Naive thymus-derived CD8-positive, alpha-beta T cell (primary cell): ENCODE measurements at regions of chr7 and their contacts with region 1.

Region 1: DNA sequence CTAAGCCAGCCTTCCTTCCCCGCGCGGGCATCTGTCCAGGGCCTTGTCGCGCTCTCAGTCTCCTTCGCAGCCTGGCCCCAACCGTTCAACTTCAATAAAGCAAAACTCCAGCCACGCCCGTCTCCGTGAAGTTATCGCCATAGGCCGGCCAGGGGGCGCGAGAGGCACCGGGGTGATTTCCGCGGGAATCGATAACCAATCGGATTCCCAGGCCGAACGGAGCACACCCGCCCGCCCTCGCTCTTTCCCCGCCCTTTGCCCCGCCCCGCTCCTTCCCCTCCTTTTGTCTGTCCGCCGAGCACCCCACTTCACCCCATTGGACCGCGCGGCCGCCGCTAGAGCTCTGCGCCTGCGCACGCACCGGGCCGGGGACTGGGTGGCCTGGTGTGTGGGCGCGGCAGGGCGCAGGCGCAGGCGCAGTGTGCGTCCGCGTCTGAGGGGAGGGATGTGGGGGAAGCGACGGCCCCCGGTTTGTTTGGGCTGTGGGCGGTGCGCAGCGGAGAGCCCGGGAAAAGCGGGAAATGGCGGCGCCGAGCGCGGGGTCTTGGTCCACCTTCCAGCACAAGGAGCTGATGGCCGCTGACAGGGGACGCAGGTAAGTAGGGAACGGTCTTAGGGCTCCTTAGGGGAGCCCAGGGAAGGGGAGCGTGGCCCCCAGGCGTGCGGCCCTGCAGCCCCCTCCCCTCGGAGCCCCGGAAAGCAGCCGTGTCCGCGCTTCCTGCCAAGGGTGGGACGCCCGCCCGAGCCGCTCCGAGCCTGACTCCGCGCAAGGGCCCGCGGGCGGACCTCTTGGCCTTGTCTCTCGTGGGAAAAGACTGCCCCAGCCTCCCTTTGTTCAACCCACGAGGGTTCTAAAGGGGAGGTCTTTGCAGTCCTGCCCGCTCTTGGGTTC is at the start of gene CASP2:
- DNase-seq: peak; percentile 93 to 100 (median 99)
- ATAC-seq: peak; percentile 92 to 94
- H3K4me3 Mint-ChIP-seq: peak within 1 kb of the TSS; percentile 91 to 98 (median 96)
- H3K27ac Mint-ChIP-seq: peak within 1 kb of the TSS; percentile 89 to 98 (median 92)
- H3K4me1 Mint-ChIP-seq: peaks cover 32 to 62% (median 59%) of the 10 kb centered on the region in 4 donors
- H3K27me3 Mint-ChIP-seq: no peaks in the 10 kb centered on the region
- polyA plus RNA-seq, gene CASP2: 12.1 to 22.0 (median 14.6) TPM

Region 2: GRCh38 chr7:142804728-142805207 is 483.4 kb before region 1 on chr7:
- POLR2A ChIA-PET with region 1: no interaction called
- DNase-seq: peak in 5 of 10 donors; percentile 43 to 72 (median 54)
- ATAC-seq: peak; percentile 1 to 5
- H3K4me3 Mint-ChIP-seq: peak overlapping the region; percentile 53 to 99 (median 86)
- H3K27ac Mint-ChIP-seq: peak overlapping the region; percentile 94 to 100 (median 100)
- H3K4me1 Mint-ChIP-seq: peaks cover 73 to 98% (median 97%) of the 10 kb centered on the region in 4 donors
- H3K27me3 Mint-ChIP-seq: peaks cover 0 to 2% (median 0%) of the 10 kb centered on the region in 5 donors

Region 3: GRCh38 chr7:143104832-143105241 is 183.3 kb before region 1 on chr7:
- POLR2A ChIA-PET with region 1: no interaction called
- DNase-seq: no peak
- ATAC-seq: no peak
- H3K4me3 Mint-ChIP-seq: no peak overlapping the region
- H3K27ac Mint-ChIP-seq: no peak overlapping the region
- H3K4me1 Mint-ChIP-seq: no peaks in the 10 kb centered on the region
- H3K27me3 Mint-ChIP-seq: no peaks in the 10 kb centered on the region

Region 4: DNA sequence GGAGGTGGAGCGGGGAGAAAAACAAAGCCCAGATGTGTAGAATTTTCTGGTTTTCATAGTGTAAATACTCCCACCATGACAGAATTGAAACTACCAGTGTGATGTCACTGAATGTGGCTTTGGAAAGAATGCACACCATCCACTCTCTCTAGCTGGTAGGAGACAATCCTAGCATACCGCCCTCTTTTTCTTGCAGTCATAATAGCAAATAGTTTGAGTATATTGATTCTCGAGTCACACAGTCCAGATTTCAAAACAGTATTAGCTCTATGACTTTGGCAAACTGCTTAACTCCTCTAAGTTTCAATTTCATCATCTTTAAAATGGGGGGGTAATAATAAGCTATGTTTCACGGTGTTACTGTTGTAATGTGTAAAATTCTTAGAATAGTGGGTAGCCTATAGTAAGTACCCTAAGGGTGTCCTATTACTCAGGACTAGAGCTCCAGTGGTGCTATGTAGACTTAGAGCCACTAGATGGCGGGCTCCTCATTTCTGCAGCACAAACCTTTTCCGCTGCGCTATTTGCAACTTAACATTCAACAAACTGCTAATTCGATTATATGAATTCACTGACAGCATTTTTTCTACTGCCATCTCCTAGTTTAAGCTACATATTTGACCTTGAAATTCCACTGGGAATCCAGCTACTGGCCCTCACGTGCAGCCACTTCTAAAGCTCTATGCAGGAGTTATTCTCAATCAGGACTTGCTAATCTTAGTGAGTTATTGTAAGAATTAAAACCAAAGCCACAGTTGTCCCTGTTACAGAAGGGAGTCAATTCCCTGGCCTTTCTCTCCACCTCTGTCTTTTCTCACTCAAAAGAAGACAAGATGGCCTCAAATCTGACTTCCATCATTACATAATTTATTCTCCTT is 47.7 kb before region 1 on chr7:
- POLR2A ChIA-PET with region 1: interaction called, 13 read pairs
- DNase-seq: peak; percentile 25 to 84 (median 73)
- ATAC-seq: peak; percentile 96 to 97
- H3K4me3 Mint-ChIP-seq: peak overlapping the region in 2 of 10 donors; percentile 14 to 24
- H3K27ac Mint-ChIP-seq: peak overlapping the region in 3 of 10 donors; percentile 46 to 66 (median 49)
- H3K4me1 Mint-ChIP-seq: peaks cover 13 to 35% (median 24%) of the 10 kb centered on the region in 4 donors
- H3K27me3 Mint-ChIP-seq: peaks cover 0 to 7% (median 2%) of the 10 kb centered on the region in 5 donors

Region 5: GRCh38 chr7:143345428-143345900 is 57.3 kb after region 1 on chr7:
- POLR2A ChIA-PET with region 1: no interaction called
- DNase-seq: peak; percentile 45 to 80 (median 58)
- ATAC-seq: peak; percentile 100
- H3K4me3 Mint-ChIP-seq: peak overlapping the region; percentile 69 to 88 (median 78)
- H3K27ac Mint-ChIP-seq: peak overlapping the region in 8 of 10 donors; percentile 18 to 82 (median 60)
- H3K4me1 Mint-ChIP-seq: peaks cover 8 to 11% (median 10%) of the 10 kb centered on the region in 4 donors
- H3K27me3 Mint-ChIP-seq: peaks cover 0 to 6% (median 4%) of the 10 kb centered on the region in 5 donors